AG04450 (cell line): ENCODE measurements at regions of chr12 and their contacts with region 1.

Region 1: GRCh38 chr12:49636979-49637755 is 13.8 kb downstream of the PRPF40B start:
- DNase-seq: peak; percentile 39
- H3K4me3 ChIP-seq: no peak overlapping the region
- H3K27ac ChIP-seq: peak overlapping the region; percentile 47
- H3K27me3 ChIP-seq: no peaks in the 10 kb centered on the region
- CTCF ChIP-seq: peak; percentile 86

Region 2: DNA sequence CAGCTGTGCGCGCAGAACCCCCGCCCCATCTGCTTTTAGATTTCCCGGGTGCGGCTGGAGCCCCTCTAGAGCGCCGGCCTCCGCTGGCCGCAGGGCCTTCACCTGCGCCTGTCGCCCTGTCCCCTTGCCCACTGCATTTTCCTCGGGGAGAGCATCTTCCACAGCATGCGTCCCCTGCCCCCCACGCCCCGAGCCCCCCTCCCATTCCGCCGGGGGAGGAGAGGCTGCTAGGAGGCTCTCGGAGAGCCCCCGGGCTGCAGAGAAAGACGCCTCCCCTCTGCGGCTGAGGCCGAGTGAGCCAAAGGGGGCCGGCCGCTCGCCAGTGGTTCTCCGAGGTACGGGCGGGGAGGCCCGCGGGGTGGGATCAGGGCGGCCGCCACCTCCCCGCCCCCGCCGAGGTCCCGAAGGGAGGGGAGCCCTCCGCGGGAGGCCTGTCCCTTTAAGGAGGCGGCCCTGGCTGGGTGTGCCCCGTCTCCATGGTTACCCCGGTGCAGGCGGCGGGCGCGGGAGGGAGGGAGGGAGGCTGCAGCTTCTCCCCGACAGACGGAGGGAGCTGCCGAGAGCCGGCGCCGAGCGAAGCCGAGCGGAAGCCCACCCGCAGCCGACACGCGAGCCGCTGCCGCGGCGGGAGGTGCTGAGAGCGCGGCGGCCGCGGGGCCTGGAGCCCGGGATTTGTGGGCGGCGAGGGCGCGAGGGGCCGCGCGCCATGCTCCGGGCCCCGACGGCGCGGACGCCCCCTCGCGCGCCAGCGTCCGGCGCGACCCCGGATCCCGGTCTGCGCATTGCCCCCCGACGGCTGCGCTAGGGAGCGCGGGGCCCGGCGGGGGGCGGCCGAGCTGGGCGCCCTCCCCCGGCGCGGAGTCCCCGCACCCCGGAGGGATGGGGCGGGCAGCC is 98.4 kb before region 1 on chr12 and contains the start of gene KCNH3:
- CTCF ChIA-PET with region 1: no interaction called
- POLR2A ChIA-PET with region 1: no interaction called
- DNase-seq: no peak
- H3K4me3 ChIP-seq: peak within 1 kb of the TSS; percentile 42
- H3K27ac ChIP-seq: no peak within 1 kb of the TSS
- H3K27me3 ChIP-seq: peaks cover 47% of the 10 kb centered on the region
- CTCF ChIP-seq: no peak
- polyA plus RNA-seq, gene KCNH3: 0.01 and 0.11 TPM in 2 replicates

Region 3: DNA sequence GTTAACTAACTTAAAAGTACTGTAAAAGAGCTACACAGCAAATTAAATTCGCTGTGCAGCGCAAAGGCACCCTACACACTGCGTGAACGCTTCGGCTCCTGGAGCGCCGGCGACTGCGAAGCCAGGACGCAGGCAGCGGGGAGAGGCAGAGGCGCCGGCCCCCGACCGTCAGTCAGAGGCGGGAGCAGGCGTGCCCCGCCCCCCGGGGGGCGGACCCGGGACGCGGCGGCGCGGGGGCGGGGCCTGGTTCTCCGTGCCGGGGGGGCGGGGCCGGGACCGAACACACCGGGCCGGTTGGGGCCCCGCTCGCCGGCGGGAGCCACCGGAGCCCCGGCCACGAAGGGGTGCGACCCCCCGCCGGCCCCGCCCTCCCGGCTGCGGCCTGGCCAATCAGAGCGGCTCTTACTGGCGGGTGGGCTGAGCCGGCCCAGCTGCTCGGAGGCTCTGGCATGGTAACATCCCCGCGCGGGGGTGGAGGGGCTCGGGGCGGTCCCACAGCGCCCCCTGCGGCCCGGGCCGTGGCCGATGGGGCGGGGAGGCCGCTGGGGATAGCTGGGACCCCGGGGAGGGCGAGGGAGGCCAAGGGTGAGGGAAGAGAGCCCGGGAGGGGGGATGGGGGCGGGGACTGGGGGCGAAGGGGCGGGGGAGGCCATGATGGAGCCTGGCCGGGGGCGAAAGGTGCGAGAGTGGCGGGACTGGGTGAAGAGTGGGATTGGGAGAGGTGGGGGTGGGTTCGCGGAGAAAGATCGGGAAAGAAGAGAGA is 13.8 kb before region 1 on chr12 and contains the start of gene PRPF40B:
- CTCF ChIA-PET with region 1: interaction called, 15 read pairs
- POLR2A ChIA-PET with region 1: interaction called, 3 read pairs
- DNase-seq: peak; percentile 30
- H3K4me3 ChIP-seq: peak within 1 kb of the TSS; percentile 65
- H3K27ac ChIP-seq: peak within 1 kb of the TSS; percentile 61
- H3K27me3 ChIP-seq: no peaks in the 10 kb centered on the region
- CTCF ChIP-seq: peak; percentile 44
- polyA plus RNA-seq, gene PRPF40B: 9.0 and 10.9 TPM in 2 replicates

Region 4: DNA sequence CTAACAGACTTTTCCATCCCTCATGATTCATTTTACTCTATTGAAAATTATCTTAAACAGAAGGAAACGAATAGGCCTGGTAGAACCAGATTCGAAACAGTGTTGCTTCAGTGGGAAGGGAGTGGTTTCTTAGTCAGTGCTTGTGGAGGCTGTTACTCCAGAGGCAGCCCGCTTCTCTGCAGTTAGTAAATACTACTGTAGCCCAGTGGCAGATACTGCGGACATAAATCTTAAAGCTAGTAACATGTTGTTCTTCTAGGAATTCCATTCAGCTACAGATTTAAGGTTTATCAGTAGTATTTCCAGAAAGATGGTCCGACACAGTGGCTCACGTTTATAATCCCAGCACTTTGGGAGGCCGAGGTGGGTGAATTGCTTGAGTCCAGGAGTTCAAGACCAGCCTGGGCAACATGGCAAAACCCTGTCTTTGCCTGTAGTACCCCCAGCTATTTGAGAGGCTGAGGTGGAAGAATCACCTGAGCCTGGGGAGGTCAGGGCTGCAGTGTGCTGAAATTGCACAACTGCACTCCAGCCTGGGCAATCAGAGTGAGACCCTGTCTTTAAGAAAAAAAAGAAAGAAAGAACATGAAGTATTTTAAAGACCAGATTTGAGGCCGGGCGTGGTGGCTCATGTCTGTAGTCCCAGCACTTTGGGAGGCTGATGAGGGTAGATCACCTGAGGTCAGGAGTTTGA is 913.5 kb after region 1 on chr12:
- CTCF ChIA-PET with region 1: no interaction called
- POLR2A ChIA-PET with region 1: no interaction called
- DNase-seq: no peak
- H3K4me3 ChIP-seq: no peak overlapping the region
- H3K27ac ChIP-seq: no peak overlapping the region
- H3K27me3 ChIP-seq: no peaks in the 10 kb centered on the region
- CTCF ChIP-seq: no peak